ENCODE measurements at regions of chr12 and their contacts with region 1.

Region 1: DNA sequence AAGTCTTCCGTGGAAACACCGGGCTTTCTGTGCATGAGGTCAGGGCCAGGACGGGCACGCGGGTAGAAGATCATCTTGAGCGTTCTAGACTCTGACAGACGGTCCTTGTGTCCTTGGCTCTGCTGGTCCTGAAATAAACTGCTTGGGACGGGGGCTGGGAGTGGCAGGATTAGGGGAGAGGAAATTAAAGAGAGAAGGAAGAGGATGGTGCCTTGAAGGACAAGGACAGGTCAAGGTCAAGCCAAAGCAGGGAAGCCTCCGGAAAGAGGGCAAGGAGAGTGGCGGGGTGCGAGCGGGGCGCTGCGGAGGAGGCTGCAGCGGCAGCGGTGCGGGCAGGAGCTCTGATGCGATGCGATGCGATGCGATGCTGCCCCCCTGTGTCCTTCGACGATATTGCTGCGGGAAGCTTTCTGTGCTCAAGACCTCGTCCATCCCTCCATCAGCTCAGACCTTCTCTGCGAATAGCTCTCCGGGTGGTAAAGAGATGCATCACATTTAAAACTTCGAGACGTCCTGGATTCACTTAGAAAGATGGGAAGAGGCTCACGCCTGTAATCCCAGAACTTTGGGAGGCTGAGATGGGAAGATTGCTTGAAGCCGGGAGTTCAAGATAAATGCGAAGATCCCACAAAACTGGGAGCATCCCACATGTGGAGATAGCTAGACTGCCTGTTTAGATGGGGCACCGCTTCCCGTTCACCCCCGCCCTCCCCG is 110.1 kb upstream of the TMEM132D start:
- DNase-seq: peak; percentile 76
- ATAC-seq: peak; percentile 82
- H3K4me3 Mint-ChIP-seq: no peak overlapping the region
- H3K27ac Mint-ChIP-seq: no peak overlapping the region
- H3K4me1 Mint-ChIP-seq: no peaks in the 10 kb centered on the region
- H3K27me3 Mint-ChIP-seq: peaks cover 12% of the 10 kb centered on the region
- CTCF ChIP-seq: peak; percentile 56

Region 2: DNA sequence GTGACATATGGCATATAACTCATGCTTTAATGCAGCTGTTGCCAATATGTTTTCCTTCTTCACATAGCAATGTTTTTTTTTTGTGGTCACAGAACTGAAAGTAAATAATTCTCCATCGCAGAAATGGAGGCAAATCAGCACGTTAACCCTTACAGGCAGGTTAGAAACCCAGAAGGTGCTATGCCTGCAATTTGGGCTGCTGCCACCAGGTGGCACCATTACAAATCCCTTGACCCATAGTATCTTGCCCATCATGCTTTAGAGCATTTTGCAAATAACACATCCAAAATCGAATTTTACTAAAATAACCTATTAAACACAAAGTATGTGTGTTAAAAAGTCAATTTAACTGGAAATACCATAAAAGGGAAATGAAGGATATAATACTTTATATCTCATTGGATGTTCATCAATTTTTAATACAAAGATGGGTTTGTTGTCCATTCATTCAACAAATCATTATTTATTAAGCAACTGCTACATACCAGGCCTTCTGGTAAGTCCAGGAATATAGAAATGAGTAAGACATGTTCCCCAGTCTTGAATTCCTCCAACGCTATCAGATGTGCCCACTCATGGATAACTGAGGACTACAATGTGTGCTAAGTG is 820.6 kb before region 1 on chr12:
- CTCF ChIA-PET with region 1: no interaction called
- POLR2A ChIA-PET with region 1: no interaction called
- intact Hi-C with region 1: loop called (anchors 5 kb)
- DNase-seq: peak; percentile 42
- ATAC-seq: no peak
- H3K4me3 Mint-ChIP-seq: no peak overlapping the region
- H3K27ac Mint-ChIP-seq: no peak overlapping the region
- H3K4me1 Mint-ChIP-seq: no peaks in the 10 kb centered on the region
- H3K27me3 Mint-ChIP-seq: no peaks in the 10 kb centered on the region
- CTCF ChIP-seq: peak; percentile 85

Region 3: DNA sequence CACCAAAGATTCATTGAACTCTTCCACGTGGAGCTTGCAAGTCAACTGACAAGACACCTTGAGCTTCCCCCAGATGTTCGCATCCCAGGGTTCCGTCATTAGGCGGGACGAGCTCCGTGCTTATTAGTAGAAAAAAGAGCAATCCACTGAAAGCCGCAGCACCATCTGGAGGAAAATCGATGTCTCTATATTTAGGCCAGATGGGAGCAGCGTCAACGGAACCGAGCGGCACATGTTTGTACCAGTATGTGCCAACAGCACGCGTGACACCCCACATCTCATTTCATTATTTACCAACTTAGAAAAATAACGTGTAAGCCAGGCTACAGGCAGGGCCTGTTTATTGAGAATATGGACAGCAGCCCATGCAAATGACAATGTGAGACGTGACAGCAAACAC is 64.3 kb before region 1 on chr12:
- CTCF ChIA-PET with region 1: no interaction called
- POLR2A ChIA-PET with region 1: no interaction called
- intact Hi-C with region 1: no loop called
- DNase-seq: no peak
- ATAC-seq: no peak
- H3K4me3 Mint-ChIP-seq: no peak overlapping the region
- H3K27ac Mint-ChIP-seq: no peak overlapping the region
- H3K4me1 Mint-ChIP-seq: no peaks in the 10 kb centered on the region
- H3K27me3 Mint-ChIP-seq: no peaks in the 10 kb centered on the region
- CTCF ChIP-seq: no peak

Region 4: DNA sequence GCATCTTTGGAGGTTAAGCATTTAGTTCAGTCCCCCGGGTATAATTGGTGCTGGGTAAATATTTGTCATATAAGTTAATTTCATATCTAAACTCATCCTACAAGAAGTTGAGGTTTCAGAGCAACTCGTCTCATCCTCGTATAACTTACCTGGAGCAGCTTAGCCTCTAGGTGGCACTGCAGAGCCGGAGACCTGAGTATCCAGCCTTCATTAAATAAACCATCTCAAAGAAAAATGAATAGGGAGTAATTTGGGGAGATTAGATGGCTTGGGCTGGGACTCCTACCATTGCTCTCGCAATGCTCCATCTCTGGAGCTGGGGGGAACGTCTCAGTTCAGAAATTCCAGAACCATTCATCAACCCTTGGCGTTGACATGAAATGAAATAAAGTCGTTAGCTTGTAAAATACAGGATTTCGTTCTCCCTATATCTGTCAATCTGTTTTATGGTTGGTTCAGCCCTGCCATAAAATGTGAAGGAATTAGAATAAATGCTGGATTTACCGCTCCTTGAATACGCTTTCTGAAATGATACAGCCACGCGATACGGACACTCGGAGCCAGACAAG is 12.8 kb after region 1 on chr12:
- CTCF ChIA-PET with region 1: interaction called, 24 read pairs
- POLR2A ChIA-PET with region 1: no interaction called
- intact Hi-C with region 1: no loop called
- DNase-seq: peak; percentile 65
- ATAC-seq: no peak
- H3K4me3 Mint-ChIP-seq: no peak overlapping the region
- H3K27ac Mint-ChIP-seq: no peak overlapping the region
- H3K4me1 Mint-ChIP-seq: no peaks in the 10 kb centered on the region
- H3K27me3 Mint-ChIP-seq: peaks cover 6% of the 10 kb centered on the region
- CTCF ChIP-seq: peak; percentile 54

Region 5: DNA sequence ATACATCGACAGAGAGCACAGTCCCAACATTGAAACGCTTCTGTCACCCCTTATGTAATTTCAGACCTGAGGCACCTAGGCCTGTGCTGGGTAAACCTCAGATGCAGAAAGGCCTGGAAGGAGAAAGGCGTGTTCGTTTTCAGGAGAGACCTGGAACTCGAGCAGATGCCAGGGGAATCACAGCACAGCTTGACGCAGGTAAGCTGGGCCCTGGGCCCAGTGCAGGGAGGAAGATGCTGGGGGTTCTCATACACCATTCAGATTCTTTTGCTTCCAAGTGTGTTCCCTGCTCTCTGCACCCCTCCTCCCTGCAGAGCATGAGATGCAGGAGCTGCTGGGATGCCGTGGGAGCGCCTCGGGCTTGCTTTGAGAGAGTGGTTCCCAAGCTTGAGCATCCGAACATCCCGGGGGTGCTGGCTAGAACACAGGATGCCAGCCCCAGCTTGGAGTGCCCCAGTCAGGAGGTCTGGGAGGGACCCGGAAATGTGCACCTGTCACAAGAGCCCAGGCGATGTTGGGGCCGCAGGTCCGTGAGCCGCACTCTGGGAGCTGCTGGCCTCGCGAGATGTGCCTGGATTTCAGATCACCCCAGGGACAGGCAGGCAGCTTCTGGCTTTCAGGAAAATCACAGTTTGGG is 184.2 kb after region 1 on chr12:
- CTCF ChIA-PET with region 1: no interaction called
- POLR2A ChIA-PET with region 1: no interaction called
- intact Hi-C with region 1: no loop called
- DNase-seq: no peak
- ATAC-seq: no peak
- H3K4me3 Mint-ChIP-seq: no peak overlapping the region
- H3K27ac Mint-ChIP-seq: no peak overlapping the region
- H3K4me1 Mint-ChIP-seq: no peaks in the 10 kb centered on the region
- H3K27me3 Mint-ChIP-seq: no peaks in the 10 kb centered on the region
- CTCF ChIP-seq: no peak